K562 (cell line): ENCODE measurements at regions of chr9 and their contacts with region 1.

Region 1: DNA sequence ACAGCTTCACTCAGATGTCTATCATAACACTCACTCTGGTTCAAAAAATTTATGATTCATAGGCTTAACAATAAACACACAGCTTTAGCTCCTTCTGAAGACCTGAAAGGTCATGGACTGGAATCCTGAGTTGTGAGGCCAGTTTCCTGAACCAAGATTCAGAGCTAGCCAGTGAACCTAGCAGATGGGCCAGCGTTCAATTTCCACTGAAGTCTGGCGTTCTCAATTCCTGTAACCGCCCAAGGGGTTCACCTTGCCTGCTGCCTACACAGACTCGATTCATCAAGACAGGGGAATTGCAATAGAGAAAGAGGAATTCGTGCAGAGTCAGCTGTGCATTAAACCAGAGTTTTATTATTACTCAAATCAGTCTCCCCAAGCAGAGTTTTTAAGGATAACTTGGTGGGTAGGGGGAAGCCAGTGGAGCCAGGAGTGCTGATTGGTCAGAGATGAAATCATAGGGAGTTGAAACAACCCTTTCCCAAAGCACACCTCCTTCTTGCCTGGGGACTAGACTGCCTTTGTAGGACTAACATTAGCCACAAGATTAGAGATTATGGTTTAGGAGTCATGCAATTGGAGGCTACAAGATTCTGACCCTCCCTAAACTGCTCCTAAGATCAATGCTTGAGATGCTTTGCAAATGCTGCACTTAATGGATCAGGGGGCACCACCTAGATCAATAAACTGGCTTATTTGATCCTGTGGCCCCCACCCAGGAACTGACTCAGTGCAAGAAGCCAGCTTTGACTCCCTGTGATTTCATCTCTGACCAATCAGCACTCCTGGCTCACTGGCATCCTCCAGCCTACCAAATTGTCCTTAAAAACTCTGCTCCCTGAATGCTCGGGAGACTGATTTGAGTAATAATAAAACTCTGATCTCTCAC is 117.6 kb upstream of the SHB start:
- DNase-seq: no peak
- ATAC-seq: no peak
- H3K4me3 ChIP-seq: no peak overlapping the region
- H3K27ac ChIP-seq: no peak overlapping the region
- H3K4me1 ChIP-seq: no peaks in the 10 kb centered on the region; a peak in 1 of 5 replicates
- H3K27me3 ChIP-seq: peaks cover 4 to 12% of the 10 kb centered on the region in 2 experiments; a peak in 2 of 5 replicates
- CTCF ChIP-seq: no peak
- EP300 ChIP-seq: no peak
- POLR2A ChIP-seq: no peak
- RAD21 ChIP-seq: no peak

Region 2: GRCh38 chr9:38235244-38235643 is 48.6 kb after region 1 on chr9:
- CTCF ChIA-PET with region 1: no interaction called
- POLR2A ChIA-PET with region 1: no interaction called
- in situ Hi-C with region 1: no loop called
- intact Hi-C with region 1: loop called (anchors 5 kb)
- DNase-seq: no peak
- ATAC-seq: no peak
- H3K4me3 ChIP-seq: no peak overlapping the region
- H3K27ac ChIP-seq: no peak overlapping the region
- H3K4me1 ChIP-seq: no peaks in the 10 kb centered on the region
- H3K27me3 ChIP-seq: peaks cover 21 to 41% of the 10 kb centered on the region in 2 experiments
- CTCF ChIP-seq: no peak
- EP300 ChIP-seq: no peak
- POLR2A ChIP-seq: no peak
- RAD21 ChIP-seq: no peak

Region 3: GRCh38 chr9:38518826-38519225 is 332.2 kb after region 1 on chr9:
- CTCF ChIA-PET with region 1: no interaction called
- POLR2A ChIA-PET with region 1: no interaction called
- in situ Hi-C with region 1: no loop called
- intact Hi-C with region 1: no loop called
- DNase-seq: no peak
- ATAC-seq: no peak
- H3K4me3 ChIP-seq: no peak overlapping the region
- H3K27ac ChIP-seq: no peak overlapping the region
- H3K4me1 ChIP-seq: no peaks in the 10 kb centered on the region
- H3K27me3 ChIP-seq: peaks cover 2 to 14% of the 10 kb centered on the region in 2 experiments; a peak in 1 of 5 replicates
- CTCF ChIP-seq: no peak
- EP300 ChIP-seq: no peak
- POLR2A ChIP-seq: no peak
- RAD21 ChIP-seq: no peak